ENCODE measurements at regions of chr20 and their contacts with region 1.

Region 1: GRCh38 chr20:49659056-49659455 is 54.6 kb downstream of the B4GALT5 start:
- DNase-seq: no peak
- H3K4me3 ChIP-seq: peak overlapping the region in 1 of 4 experiments; percentile 27; a peak in 1 of 8 replicates
- H3K27ac ChIP-seq: no peak overlapping the region; the same call in 1 of the 2 replicates
- H3K4me1 ChIP-seq: peaks cover 3 to 18% (median 15%) of the 10 kb centered on the region in 4 experiments; a peak in 6 of 7 replicates
- H3K27me3 ChIP-seq: no peaks in the 10 kb centered on the region
- CTCF ChIP-seq: no peak
- EP300 ChIP-seq: no peak
- POLR2A ChIP-seq: no peak
- RAD21 ChIP-seq: no peak

Region 2: DNA sequence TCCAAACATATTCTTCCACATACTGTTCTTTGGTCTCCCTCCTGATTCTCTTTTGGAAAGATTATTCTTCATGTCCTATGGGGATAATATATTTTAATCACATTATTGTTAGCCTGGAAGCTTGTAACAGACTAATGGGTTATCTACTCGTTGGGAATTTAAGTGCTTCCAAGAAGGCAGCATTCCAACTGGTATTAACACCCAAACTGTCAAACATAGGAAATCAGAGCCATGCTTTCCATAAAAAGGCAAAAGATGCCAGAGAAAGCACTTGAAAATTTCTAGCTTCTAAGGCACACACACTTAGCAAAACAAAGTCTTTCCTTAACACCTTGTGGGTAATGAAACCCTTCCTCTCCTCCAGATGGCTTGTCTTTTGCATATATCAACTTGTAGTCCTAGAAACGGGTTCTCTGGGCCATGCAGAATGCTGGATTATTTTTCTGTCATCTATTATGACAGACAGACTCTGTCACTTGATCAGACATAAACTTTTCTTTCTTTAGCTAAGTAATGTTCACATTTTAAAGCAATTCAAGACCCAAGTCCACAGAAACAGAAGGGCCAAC is 13.1 kb after region 1 on chr20:
- CTCF ChIA-PET with region 1: interaction called, 10 read pairs
- POLR2A ChIA-PET with region 1: interaction called, 5 read pairs
- DNase-seq: no peak
- H3K4me3 ChIP-seq: no peak overlapping the region
- H3K27ac ChIP-seq: no peak overlapping the region
- H3K4me1 ChIP-seq: peaks cover 0 to 17% (median 10%) of the 10 kb centered on the region in 4 experiments; a peak in 6 of 7 replicates
- H3K27me3 ChIP-seq: no peaks in the 10 kb centered on the region
- CTCF ChIP-seq: no peak
- EP300 ChIP-seq: no peak
- POLR2A ChIP-seq: no peak
- RAD21 ChIP-seq: no peak